ENCODE measurements at regions of chr11 and their contacts with region 1.

Region 1: DNA sequence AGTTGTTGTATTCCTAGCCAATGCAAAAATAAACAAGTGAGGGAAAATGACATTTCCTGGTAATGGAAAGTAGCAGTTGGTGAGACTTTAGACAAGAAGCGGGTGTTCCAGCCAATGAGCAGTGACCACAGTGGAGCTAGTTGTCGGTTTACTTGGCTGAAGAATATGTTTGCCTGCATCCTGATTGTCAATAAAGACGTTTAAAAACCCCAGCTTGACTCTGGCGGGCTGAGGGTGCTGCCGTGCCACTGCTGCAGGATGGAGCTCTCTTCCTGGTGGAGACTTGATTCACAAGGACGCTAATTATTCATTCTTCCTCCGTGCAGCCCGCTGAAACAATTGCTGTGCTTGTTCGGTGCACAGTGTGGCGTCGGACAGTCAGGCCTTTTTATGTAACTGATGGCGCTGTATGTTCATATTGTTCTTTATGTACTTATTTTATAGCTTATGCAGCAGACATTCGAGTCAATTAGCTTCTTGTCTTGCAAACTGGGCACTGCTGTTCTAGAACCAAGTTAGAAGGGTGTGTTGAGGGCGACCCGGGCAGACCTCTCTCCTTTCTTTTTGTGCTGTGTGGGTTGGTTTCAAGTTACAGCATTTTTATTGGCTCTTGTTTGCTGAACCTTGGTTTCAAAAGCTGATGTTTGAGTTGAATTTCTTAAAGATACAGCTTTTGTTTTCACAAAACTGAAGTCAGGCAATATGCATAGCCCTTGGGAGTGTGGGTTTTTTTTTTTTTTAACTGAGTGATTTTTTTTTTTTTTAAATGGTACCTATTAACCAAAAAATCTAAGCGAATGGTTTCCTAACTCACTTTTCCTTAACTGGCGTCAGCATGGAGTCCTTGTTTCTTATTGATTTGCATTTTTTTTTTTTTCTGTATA is 153.9 kb downstream of the TEAD1 start:
- DNase-seq: peak; percentile 91
- H3K4me3 ChIP-seq: peak overlapping the region; percentile 24 to 84 (median 63)
- H3K27ac ChIP-seq: peak overlapping the region; percentile 52
- H3K4me1 ChIP-seq: peaks cover 43% of the 10 kb centered on the region
- H3K27me3 ChIP-seq: no peaks in the 10 kb centered on the region
- CTCF ChIP-seq: no peak
- POLR2A ChIP-seq: peak; percentile 73

Region 2: GRCh38 chr11:12411806-12412727 is 416.1 kb before region 1 on chr11:
- CTCF ChIA-PET with region 1: no interaction called
- POLR2A ChIA-PET with region 1: no interaction called
- dilution Hi-C with region 1: no loop called
- intact Hi-C with region 1: loop called (anchors 5 kb)
- DNase-seq: peak; percentile 82
- H3K4me3 ChIP-seq: no peak overlapping the region
- H3K27ac ChIP-seq: peak overlapping the region; percentile 85
- H3K4me1 ChIP-seq: peaks cover 17% of the 10 kb centered on the region
- H3K27me3 ChIP-seq: no peaks in the 10 kb centered on the region
- CTCF ChIP-seq: peak; percentile 88 to 90
- POLR2A ChIP-seq: peak; percentile 19

Region 3: GRCh38 chr11:12802418-12803085 is 25.6 kb before region 1 on chr11:
- CTCF ChIA-PET with region 1: interaction called, 3 read pairs
- POLR2A ChIA-PET with region 1: interaction called, 3 read pairs
- dilution Hi-C with region 1: no loop called
- intact Hi-C with region 1: loop called (anchors 2 kb)
- DNase-seq: peak; percentile 98
- H3K4me3 ChIP-seq: no peak overlapping the region
- H3K27ac ChIP-seq: peak overlapping the region; percentile 72
- H3K4me1 ChIP-seq: peaks cover 33% of the 10 kb centered on the region
- H3K27me3 ChIP-seq: no peaks in the 10 kb centered on the region
- CTCF ChIP-seq: no peak
- POLR2A ChIP-seq: no peak

Region 4: DNA sequence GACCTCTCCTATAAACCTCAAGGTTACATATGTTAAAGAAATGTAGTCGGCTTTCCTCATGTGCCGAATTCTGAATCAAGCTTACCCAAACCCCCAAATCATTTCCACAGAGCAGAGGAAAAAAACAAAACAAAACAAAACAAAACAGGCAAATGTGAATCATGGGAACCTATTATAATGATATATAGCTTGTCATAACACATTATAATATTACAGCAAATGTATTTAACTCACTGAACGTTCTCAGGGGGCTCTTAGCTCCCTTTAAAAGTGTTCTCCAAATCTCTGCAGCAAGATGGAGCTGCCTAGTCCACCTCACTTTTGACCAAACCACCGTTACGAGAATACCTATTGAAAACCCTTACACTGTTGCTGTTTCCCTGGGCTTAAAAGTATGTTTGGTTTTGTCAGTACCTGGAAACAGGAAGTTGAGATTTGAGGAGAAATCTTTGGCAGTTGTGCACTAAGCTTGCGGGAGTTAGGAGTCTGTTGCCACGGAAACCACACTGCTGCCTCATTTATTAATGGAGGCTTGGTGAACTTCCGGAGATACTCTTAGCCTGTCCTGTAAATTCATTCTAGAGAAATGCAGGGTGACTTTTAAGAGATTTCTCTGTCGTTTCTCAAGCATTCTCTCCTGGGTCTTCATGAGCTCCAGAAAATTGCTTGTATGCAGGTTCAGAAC is 13.9 kb after region 1 on chr11:
- CTCF ChIA-PET with region 1: interaction called, 24 read pairs
- POLR2A ChIA-PET with region 1: interaction called, 6 read pairs
- dilution Hi-C with region 1: no loop called
- intact Hi-C with region 1: loop called (anchors 1 kb)
- DNase-seq: peak; percentile 85
- H3K4me3 ChIP-seq: peak overlapping the region in 1 of 3 experiments; percentile 30
- H3K27ac ChIP-seq: peak overlapping the region; percentile 56
- H3K4me1 ChIP-seq: peaks cover 38% of the 10 kb centered on the region
- H3K27me3 ChIP-seq: no peaks in the 10 kb centered on the region
- CTCF ChIP-seq: no peak
- POLR2A ChIP-seq: no peak

Region 5: GRCh38 chr11:12864316-12865156 is 36.4 kb after region 1 on chr11:
- CTCF ChIA-PET with region 1: interaction called, 4 read pairs
- POLR2A ChIA-PET with region 1: no interaction called
- dilution Hi-C with region 1: no loop called
- intact Hi-C with region 1: loop called (anchors 1 kb)
- DNase-seq: peak; percentile 97
- H3K4me3 ChIP-seq: no peak overlapping the region
- H3K27ac ChIP-seq: peak overlapping the region; percentile 32
- H3K4me1 ChIP-seq: peaks cover 7% of the 10 kb centered on the region
- H3K27me3 ChIP-seq: no peaks in the 10 kb centered on the region
- CTCF ChIP-seq: no peak
- POLR2A ChIP-seq: no peak

Region 6: GRCh38 chr11:13289081-13289480 is 460.9 kb after region 1 on chr11:
- CTCF ChIA-PET with region 1: no interaction called
- POLR2A ChIA-PET with region 1: no interaction called
- dilution Hi-C with region 1: no loop called
- intact Hi-C with region 1: no loop called
- DNase-seq: no peak
- H3K4me3 ChIP-seq: no peak overlapping the region
- H3K27ac ChIP-seq: no peak overlapping the region
- H3K4me1 ChIP-seq: no peaks in the 10 kb centered on the region
- H3K27me3 ChIP-seq: no peaks in the 10 kb centered on the region
- CTCF ChIP-seq: no peak
- POLR2A ChIP-seq: no peak

Region 7: DNA sequence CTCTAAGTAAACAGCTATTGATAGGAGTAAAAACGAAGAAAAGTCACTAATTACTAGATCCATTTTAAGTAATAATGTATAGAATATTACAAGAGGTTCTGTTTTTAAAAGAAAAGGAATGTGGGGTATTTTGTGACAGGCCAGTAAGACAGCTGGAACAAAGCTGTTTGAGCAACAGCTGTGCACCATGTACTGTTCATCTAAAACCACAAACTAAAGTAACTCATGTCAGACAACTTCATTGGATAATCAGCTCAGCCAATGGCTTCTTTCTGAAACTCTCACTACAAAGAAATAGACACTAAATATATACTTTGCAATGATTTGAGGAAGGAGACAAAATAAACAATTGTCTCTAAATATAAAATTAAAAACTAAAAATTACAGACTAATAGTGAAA is 1514.7 kb after region 1 on chr11:
- CTCF ChIA-PET with region 1: no interaction called
- POLR2A ChIA-PET with region 1: no interaction called
- dilution Hi-C with region 1: no loop called
- intact Hi-C with region 1: loop called (anchors 5 kb)
- DNase-seq: no peak
- H3K4me3 ChIP-seq: no peak overlapping the region
- H3K27ac ChIP-seq: no peak overlapping the region
- H3K4me1 ChIP-seq: peaks cover 5% of the 10 kb centered on the region
- H3K27me3 ChIP-seq: no peaks in the 10 kb centered on the region
- CTCF ChIP-seq: no peak
- POLR2A ChIP-seq: no peak